CD14-positive monocyte (primary cell): ENCODE measurements at regions of chr6 and their contacts with region 1.

Region 1: DNA sequence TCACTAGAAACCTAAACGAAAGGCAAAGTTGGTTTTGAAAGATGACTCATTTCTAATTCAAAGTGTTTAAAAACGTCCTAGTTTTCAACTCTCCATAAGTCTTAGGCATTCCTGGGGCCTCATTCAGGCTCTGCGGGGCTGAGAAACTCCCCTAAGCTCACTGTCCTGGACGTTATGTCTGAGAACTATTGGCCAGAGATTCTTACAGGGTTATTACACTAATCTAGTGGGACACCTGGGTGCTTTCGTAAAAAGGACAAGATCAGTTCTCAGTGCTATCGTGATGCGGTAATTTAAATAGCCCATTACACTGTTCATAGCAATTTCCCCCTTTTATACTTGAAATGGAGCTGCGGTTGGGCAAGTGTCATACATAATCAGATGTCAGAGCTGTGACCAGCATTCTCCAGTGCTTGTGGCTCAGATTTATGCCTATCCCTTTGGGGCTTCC is 280.9 kb downstream of the QKI start:
- DNase-seq: peak in 1 of 3 donors; percentile 25
- H3K4me3 ChIP-seq: no peak overlapping the region
- H3K4me3 Mint-ChIP-seq: no peak overlapping the region
- H3K27ac ChIP-seq: peak overlapping the region in 1 of 2 donors; percentile 61
- H3K27ac Mint-ChIP-seq: peak overlapping the region in 5 of 7 donors; percentile 70 to 84 (median 81)
- H3K4me1 ChIP-seq: peaks cover 31 to 34% of the 10 kb centered on the region in 2 donors
- H3K4me1 Mint-ChIP-seq: peaks cover 31% of the 10 kb centered on the region
- H3K27me3 ChIP-seq: peaks cover 6 to 13% of the 10 kb centered on the region in 2 donors
- H3K27me3 Mint-ChIP-seq: peaks cover 12 to 34% (median 23%) of the 10 kb centered on the region in 3 donors
- CTCF ChIP-seq: no peak

Region 2: GRCh38 chr6:163661272-163661671 is 34.2 kb before region 1 on chr6:
- intact Hi-C with region 1: loop called in 1 of 2 experiments (anchors 5 kb)
- DNase-seq: peak; percentile 41 to 69 (median 62)
- H3K4me3 ChIP-seq: peak overlapping the region in 1 of 3 experiments; percentile 46
- H3K4me3 Mint-ChIP-seq: peak overlapping the region; percentile 32 to 87
- H3K27ac ChIP-seq: peak overlapping the region; percentile 73 to 76
- H3K27ac Mint-ChIP-seq: peak overlapping the region; percentile 74 to 93 (median 86)
- H3K4me1 ChIP-seq: peaks cover 47 to 52% of the 10 kb centered on the region in 2 donors
- H3K4me1 Mint-ChIP-seq: peaks cover 36% of the 10 kb centered on the region
- H3K27me3 ChIP-seq: peaks cover 0 to 3% of the 10 kb centered on the region in 2 donors
- H3K27me3 Mint-ChIP-seq: peaks cover 8 to 17% (median 10%) of the 10 kb centered on the region in 3 donors
- CTCF ChIP-seq: no peak